Posterior vena cava (tissue), 2 donors: ENCODE measurements at regions of chr11 and their contacts with region 1.

Region 1: DNA sequence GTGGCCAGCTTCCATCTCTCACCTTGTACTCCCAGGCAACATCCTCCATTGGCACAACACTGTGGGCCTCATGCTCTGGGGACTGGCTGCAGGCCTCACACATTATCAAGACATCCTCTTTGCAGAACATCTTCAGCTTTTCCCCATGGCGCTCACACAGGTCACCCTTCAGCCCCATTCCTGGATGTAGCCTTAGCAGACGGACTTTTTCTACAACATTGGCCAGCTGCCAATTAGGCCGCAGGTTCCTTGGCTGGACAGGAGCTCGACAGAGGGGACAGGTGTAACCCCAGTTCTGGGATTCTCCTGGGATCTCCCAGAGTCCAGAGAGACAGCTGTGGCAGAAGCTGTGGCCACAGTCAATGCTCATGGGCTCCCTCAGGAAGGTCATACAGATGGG is 3.0 kb downstream of the TRIM68 start:
- DNase-seq: no peak

Region 2: DNA sequence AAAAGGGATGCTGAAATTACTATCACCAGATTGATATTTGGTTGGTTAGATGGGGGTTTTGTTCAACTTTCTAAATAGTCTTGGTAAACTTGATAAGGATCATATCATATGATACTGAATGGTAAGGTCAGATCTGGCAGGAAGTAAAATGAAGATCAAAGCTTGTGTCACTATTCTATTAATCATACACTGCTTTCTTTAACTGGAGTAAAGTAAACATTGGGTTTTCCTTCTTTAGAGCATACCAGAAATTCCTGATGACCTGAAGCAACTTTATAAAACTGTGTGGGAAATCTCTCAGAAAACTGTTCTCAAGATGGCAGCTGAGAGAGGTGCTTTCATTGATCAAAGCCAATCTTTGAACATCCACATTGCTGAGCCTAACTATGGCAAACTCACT is 470.2 kb before region 1 on chr11:
- intact Hi-C with region 1: no loop called
- DNase-seq: no peak

Region 3: DNA sequence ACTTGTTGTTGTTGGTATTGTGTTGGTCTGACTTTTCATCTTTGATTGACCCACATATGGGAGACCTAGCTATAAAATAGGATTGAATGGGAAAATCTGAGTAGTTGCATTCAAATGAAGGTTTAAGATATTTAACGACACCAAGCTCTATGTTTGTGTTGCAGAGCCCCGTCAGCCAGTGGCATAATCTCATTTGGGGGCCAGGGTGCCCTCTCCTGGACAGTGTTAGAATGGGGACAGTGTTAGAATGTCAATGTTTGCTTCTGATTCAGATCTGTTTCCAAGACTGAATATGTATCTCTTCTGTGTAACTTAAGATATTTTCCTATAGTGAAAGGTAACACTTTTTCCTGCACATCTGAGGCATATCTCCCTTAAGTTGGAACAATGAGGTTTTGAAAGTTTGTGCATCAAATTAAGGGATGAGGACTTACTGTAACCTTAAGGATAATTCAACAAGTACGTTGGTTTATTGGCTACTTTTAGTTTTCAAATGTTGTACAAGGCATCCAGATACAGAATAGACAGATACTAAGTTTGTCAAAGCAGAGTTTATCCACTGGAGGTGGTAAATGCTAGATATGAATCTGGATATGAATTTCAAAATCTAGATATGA is 65.3 kb before region 1 on chr11:
- intact Hi-C with region 1: no loop called
- DNase-seq: no peak

Region 4: GRCh38 chr11:4577761-4578160 is 27.3 kb before region 1 on chr11:
- intact Hi-C with region 1: loop called in 1 of 2 experiments (anchors 1 kb)
- DNase-seq: no peak